ENCODE measurements at regions of chr17 and their contacts with region 1.

Region 1: GRCh38 chr17:41107941-41108450 is 2.8 kb downstream of the KRTAP4-9 start:
- DNase-seq: no peak
- ATAC-seq: no peak
- H3K4me3 ChIP-seq: no peak overlapping the region
- H3K27ac ChIP-seq: no peak overlapping the region
- H3K4me1 ChIP-seq: no peaks in the 10 kb centered on the region
- H3K27me3 ChIP-seq: peaks cover 0 to 4% of the 10 kb centered on the region in 2 experiments; a peak in 2 of 5 replicates
- CTCF ChIP-seq: no peak
- EP300 ChIP-seq: no peak
- POLR2A ChIP-seq: no peak
- RAD21 ChIP-seq: no peak

Region 2: GRCh38 chr17:41071606-41072360 is 36.2 kb before region 1 on chr17:
- CTCF ChIA-PET with region 1: no interaction called
- POLR2A ChIA-PET with region 1: no interaction called
- in situ Hi-C with region 1: no loop called
- intact Hi-C with region 1: no loop called
- DNase-seq: no peak
- ATAC-seq: no peak; the same call in 2 of the 3 replicates
- H3K4me3 ChIP-seq: no peak overlapping the region
- H3K27ac ChIP-seq: no peak overlapping the region
- H3K4me1 ChIP-seq: no peaks in the 10 kb centered on the region
- H3K27me3 ChIP-seq: peaks cover 0 to 5% of the 10 kb centered on the region in 2 experiments; a peak in 1 of 5 replicates
- CTCF ChIP-seq: no peak
- EP300 ChIP-seq: no peak
- POLR2A ChIP-seq: no peak
- RAD21 ChIP-seq: no peak

Region 3: DNA sequence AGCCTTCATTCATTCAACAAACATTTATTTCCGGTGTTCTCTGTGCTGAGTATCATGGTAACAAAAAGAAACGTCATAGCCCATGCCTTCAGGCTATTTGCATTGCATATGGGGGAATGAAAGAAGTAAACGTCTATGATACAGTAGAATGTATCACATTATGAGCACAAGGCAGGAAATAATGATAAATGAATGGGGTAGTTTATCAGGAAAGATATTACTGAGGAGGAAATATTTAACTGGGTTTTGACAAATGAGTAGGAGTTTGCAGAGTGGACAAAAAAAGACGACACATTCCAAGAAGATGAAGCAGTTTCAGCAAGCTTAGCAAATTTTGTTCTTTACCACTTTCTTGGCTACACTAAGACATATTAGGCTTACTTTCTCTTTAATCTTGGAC is 25.4 kb before region 1 on chr17:
- CTCF ChIA-PET with region 1: no interaction called
- POLR2A ChIA-PET with region 1: no interaction called
- in situ Hi-C with region 1: no loop called
- intact Hi-C with region 1: loop called (anchors 1 kb)
- DNase-seq: no peak
- ATAC-seq: no peak
- H3K4me3 ChIP-seq: no peak overlapping the region
- H3K27ac ChIP-seq: no peak overlapping the region
- H3K4me1 ChIP-seq: no peaks in the 10 kb centered on the region
- H3K27me3 ChIP-seq: no peaks in the 10 kb centered on the region; a peak in 2 of 5 replicates
- CTCF ChIP-seq: no peak
- EP300 ChIP-seq: no peak
- POLR2A ChIP-seq: no peak
- RAD21 ChIP-seq: no peak

Region 4: DNA sequence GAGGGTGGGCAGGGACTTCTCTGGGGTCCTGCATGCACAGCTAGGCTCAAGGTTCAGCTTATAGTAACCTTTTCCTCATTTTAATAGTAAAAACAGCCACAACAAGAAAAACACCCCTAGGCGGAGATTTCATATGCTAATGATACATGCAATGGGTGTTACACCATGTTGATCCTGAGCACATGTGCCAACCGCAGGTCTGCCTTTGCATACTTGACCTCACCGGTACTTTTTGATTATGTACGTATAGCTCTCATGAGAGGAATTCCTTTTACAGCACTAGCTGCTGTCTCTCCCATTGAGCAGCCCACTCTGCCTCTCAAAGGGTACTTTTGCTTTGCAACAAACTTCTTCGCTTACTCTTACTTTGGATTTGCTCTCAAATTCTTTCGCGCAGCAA is 11.9 kb before region 1 on chr17:
- CTCF ChIA-PET with region 1: no interaction called
- POLR2A ChIA-PET with region 1: no interaction called
- in situ Hi-C with region 1: no loop called
- intact Hi-C with region 1: no loop called
- DNase-seq: no peak
- ATAC-seq: no peak
- H3K4me3 ChIP-seq: no peak overlapping the region
- H3K27ac ChIP-seq: no peak overlapping the region
- H3K4me1 ChIP-seq: no peaks in the 10 kb centered on the region
- H3K27me3 ChIP-seq: peaks cover 0 to 11% of the 10 kb centered on the region in 2 experiments; a peak in 2 of 5 replicates
- CTCF ChIP-seq: no peak
- EP300 ChIP-seq: no peak
- POLR2A ChIP-seq: no peak
- RAD21 ChIP-seq: no peak

Region 5: GRCh38 chr17:41167561-41167960 is 59.6 kb after region 1 on chr17:
- CTCF ChIA-PET with region 1: no interaction called
- POLR2A ChIA-PET with region 1: no interaction called
- in situ Hi-C with region 1: no loop called
- intact Hi-C with region 1: no loop called
- DNase-seq: no peak
- ATAC-seq: no peak
- H3K4me3 ChIP-seq: no peak overlapping the region
- H3K27ac ChIP-seq: no peak overlapping the region
- H3K4me1 ChIP-seq: no peaks in the 10 kb centered on the region
- H3K27me3 ChIP-seq: no peaks in the 10 kb centered on the region; a peak in 1 of 5 replicates
- CTCF ChIP-seq: no peak
- EP300 ChIP-seq: no peak
- POLR2A ChIP-seq: no peak
- RAD21 ChIP-seq: no peak

Measured in HepG2 (cell line).